ENCODE measurements at regions of chr12 and their contacts with region 1.

Region 1: DNA sequence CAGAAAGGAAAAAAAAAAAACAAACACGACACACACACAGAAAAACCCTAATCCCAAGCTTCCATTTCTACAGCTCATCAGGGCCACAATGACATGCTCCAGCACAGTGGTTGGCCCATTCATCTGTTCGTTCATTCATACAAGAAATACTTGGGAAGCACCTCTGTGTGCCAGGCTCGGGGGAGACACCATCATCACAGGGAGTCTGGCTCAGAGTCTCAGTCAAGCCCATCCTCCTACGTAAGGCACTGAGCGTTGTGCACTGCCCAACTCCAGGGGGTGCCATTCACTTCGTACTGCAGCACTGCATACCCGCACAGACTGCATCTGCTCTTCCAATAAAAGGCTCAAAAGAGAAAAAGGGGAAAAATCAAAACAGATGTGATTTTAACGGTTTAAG is 15.3 kb downstream of the VPS37B start:
- DNase-seq: no peak
- ATAC-seq: peak; percentile 80

Region 2: GRCh38 chr12:122946690-122947341 is 66.1 kb after region 1 on chr12:
- intact Hi-C with region 1: loop called (anchors 5 kb)
- DNase-seq: peak; percentile 83
- ATAC-seq: peak; percentile 85

Measured in sciatic nerve (tissue), 2 donors.